ENCODE measurements at regions of chr1 and their contacts with region 1.

Region 1: GRCh38 chr1:222792744-222793143 is 22.1 kb upstream of the DISP1 start:
- DNase-seq: no peak
- H3K4me3 ChIP-seq: no peak overlapping the region
- H3K27ac ChIP-seq: no peak overlapping the region
- H3K4me1 ChIP-seq: no peaks in the 10 kb centered on the region
- H3K27me3 ChIP-seq: no peaks in the 10 kb centered on the region
- CTCF ChIP-seq: peak; percentile 46 to 51

Region 2: DNA sequence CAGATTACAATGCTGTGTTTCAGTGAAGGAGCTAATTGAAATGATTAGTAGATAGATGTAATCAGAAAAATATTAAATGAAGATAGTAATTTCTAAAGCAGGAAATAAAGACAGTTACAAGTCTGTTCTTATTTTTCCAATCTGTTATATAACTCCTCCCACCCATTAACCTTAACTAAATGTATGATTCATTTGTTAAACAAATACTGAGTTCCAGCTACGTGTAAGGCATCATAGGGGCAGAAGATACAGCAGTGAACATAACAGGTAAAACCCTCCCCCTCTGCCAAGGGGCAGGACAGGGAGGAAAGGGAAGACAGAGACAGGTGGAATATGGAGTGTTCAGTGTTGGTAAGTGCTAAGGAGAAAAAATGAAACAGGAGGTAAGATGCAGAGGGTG is 55.8 kb before region 1 on chr1 and contains the start of gene FAM177B:
- CTCF ChIA-PET with region 1: no interaction called
- dilution Hi-C with region 1: no loop called
- in situ Hi-C with region 1: no loop called
- intact Hi-C with region 1: loop called (anchors 5 kb)
- DNase-seq: peak; percentile 17
- H3K4me3 ChIP-seq: no peak within 1 kb of the TSS
- H3K27ac ChIP-seq: no peak within 1 kb of the TSS
- H3K4me1 ChIP-seq: peaks cover 4% of the 10 kb centered on the region
- H3K27me3 ChIP-seq: no peaks in the 10 kb centered on the region
- CTCF ChIP-seq: no peak
- total RNA-seq, gene FAM177B: not detected

Region 3: DNA sequence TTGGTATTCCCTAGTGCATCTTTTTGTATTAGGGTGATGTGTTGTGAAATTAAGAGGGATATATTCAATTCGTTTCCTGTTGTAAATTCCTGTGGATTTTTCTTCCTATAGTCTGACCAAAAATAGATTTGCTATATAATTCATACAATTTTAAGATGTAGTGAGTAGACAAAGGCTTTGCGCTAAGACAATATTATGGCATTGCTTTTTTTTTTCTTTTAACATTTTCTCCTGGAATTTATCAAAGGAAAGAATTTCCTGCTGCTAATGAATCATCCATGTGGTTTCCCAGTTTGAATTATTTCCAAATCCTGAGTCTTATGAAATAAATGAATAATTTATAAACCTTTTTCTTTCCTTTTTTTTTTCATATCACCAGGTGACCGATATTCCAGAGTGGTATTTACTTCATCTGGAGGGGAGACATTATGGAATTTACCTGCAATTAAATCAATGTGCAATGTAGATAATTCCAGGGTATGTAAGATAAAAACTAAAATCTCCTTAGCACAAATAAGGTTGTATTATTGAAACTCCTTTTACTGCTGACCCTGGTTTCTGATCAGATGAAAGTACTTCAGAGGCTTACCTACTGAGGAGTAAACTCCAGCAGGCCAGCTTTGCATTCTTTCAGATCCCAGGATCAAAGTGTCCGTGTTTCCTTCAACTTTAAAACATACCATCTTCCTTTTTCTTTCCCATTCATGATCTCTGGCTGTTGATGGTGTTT is 201.9 kb after region 1 on chr1:
- CTCF ChIA-PET with region 1: no interaction called
- dilution Hi-C with region 1: no loop called
- in situ Hi-C with region 1: no loop called
- intact Hi-C with region 1: loop called (anchors 5 kb)
- DNase-seq: peak; percentile 58
- H3K4me3 ChIP-seq: peak overlapping the region in 1 of 3 experiments; percentile 1
- H3K27ac ChIP-seq: no peak overlapping the region
- H3K4me1 ChIP-seq: peaks cover 19% of the 10 kb centered on the region
- H3K27me3 ChIP-seq: peaks cover 2% of the 10 kb centered on the region
- CTCF ChIP-seq: no peak

Region 4: DNA sequence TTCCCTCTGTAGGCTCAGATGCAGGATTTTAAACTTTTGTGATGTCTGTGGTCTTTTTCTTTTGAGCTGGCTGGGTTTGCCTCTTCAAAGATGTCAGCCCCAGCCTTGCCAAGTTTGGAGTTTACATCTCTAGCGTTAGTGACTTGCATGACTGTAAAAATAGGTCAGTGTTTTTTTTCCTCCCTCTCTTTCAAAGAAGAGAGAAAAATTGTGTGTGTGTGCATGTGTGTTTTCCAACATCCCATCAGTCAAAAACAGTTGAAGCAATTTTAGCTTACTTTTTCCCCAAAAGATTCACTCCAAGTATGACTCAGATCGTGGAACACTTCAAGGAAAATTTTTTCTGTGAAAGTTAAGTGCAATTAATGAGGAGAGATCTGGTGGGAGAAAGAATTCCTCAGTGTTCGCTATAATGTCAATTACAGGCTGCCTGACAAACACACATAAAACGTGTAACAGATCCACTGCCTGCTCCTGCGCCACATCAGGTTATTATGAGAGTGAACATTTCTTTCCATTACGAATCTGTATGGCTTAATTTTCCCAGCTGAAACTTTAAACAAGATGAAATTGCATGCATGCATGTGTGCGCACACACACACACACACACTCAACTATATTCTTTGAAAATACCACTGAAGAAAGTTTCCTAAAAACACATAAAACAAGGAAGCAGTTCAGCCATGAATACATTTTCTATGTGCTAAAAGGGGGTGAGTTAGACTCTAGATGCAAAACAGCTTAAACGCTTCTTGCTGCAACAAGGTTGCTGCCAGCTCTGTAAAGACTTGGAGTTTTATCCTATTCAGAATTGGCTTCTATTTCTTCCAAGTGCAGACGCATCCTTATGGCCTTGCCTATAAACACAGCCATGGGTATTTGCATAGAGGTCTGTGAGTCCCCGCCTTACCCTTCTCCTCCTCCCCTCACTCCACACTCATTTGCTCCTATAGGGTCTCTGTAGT is 294.8 kb after region 1 on chr1:
- CTCF ChIA-PET with region 1: interaction called, 4 read pairs
- dilution Hi-C with region 1: loop called (anchors 25 kb)
- in situ Hi-C with region 1: loop called (anchors 5 to 10 kb)
- intact Hi-C with region 1: loop called (anchors 1 kb)
- DNase-seq: no peak
- H3K4me3 ChIP-seq: no peak overlapping the region
- H3K27ac ChIP-seq: no peak overlapping the region
- H3K4me1 ChIP-seq: no peaks in the 10 kb centered on the region
- H3K27me3 ChIP-seq: no peaks in the 10 kb centered on the region
- CTCF ChIP-seq: no peak

Region 5: GRCh38 chr1:223683586-223684487 is 891.1 kb after region 1 on chr1:
- CTCF ChIA-PET with region 1: no interaction called
- dilution Hi-C with region 1: no loop called
- in situ Hi-C with region 1: no loop called
- intact Hi-C with region 1: loop called (anchors 5 kb)
- DNase-seq: peak; percentile 54
- H3K4me3 ChIP-seq: no peak overlapping the region
- H3K27ac ChIP-seq: no peak overlapping the region
- H3K4me1 ChIP-seq: no peaks in the 10 kb centered on the region
- H3K27me3 ChIP-seq: no peaks in the 10 kb centered on the region
- CTCF ChIP-seq: peak; percentile 69 to 72

Measured in mammary epithelial cell (primary cell).